Left ventricle myocardium superior (tissue), 1 donor: ENCODE measurements at regions of chr19 and their contacts with region 1.

Region 1: DNA sequence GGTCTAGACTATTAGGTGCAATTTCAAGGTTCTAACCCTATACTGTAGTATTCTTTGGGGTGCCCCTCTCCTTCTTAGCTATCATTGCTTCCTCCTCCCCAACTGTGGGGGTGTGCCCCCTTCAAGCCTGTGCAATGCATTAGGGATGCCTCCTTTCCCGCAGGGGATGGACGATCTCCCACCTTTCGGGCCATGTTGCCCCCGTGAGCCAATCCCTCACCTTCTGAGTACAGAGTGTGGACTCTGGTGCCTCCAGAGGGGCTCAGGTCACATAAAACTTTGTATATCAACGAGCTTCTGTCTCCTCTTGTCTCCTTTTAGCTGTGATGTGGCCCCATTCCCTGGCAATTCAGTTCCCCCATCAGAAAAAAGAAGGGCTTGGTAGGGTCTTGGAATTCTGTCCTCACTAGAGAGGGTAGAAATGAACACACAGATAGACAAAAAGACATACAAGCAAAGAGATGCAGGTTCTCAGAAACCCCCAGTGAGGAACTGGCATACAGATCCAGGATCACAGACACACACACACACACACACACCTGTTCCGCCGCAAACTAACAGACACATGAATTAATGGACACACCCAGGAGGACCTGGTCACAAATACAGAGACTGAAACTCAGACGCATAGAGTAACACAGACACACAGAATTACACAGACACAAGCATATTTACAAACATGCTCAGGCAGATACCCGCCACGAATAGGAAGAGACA is 2.5 kb upstream of the HNRNPUL1 start:
- DNase-seq: no peak
- ATAC-seq: no peak

Region 2: GRCh38 chr19:41175801-41176777 is 85.5 kb before region 1 on chr19:
- intact Hi-C with region 1: no loop called
- DNase-seq: peak; percentile 35
- ATAC-seq: peak; percentile 81

Region 3: GRCh38 chr19:41205994-41206393 is 55.6 kb before region 1 on chr19:
- intact Hi-C with region 1: loop called (anchors 2 kb)
- DNase-seq: no peak
- ATAC-seq: no peak

Region 4: GRCh38 chr19:41341669-41342490 is 80.2 kb after region 1 on chr19:
- intact Hi-C with region 1: no loop called
- DNase-seq: no peak
- ATAC-seq: peak; percentile 55